Activated CD8-positive, alpha-beta T cell treated with anti-CD3 and anti-CD28 coated beads, Interleukin-2, amount 10 ng/mL, durations not matched to agents 7 days and 5 days (primary cell): ENCODE measurements at regions of chr11 and their contacts with region 1.

Region 1: DNA sequence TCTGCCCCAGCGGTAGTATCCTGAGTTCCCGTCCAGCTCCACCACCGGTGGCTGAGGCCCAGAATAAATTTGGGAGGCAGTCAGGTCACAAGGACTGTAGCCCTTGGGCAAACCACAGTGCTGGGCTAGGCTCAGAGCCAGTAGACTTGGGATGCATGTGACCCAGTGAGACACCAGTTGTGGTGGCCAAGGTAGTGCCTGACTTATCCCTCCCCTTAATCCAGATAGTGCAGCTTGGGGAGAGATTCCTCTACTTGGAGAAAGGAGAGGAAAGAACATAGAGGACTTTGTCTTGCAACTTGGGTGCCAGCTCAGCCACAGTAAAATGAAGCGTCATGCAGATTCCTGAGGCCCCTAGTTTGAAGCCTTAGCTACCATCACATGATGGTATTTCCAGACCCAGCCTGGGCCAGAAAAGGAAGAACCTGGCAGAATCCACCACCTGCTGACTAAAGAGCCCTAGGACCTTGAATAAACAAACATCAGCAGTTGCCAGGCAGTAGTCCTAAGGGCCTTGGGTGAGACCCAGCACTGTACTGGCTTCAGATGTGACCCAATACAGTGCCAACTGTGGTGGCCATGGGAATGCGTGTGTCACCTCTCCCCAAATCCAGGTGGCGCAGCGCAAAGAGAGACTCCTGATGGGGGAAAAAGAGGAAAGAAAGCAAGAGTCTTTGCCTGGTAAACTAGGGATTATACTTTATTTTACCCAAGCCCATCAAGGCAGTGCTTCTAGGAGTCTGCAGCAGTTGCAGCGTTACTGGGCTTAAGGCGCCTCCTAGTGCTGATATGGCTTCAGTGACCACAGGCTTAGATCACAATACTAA is 17.0 kb upstream of the DDX10 start:
- DNase-seq: peak; percentile 73
- ATAC-seq: peak; percentile 90
- H3K4me3 Mint-ChIP-seq: no peak overlapping the region
- H3K27ac Mint-ChIP-seq: no peak overlapping the region
- H3K4me1 Mint-ChIP-seq: no peaks in the 10 kb centered on the region
- H3K27me3 Mint-ChIP-seq: peaks cover 1% of the 10 kb centered on the region

Region 2: DNA sequence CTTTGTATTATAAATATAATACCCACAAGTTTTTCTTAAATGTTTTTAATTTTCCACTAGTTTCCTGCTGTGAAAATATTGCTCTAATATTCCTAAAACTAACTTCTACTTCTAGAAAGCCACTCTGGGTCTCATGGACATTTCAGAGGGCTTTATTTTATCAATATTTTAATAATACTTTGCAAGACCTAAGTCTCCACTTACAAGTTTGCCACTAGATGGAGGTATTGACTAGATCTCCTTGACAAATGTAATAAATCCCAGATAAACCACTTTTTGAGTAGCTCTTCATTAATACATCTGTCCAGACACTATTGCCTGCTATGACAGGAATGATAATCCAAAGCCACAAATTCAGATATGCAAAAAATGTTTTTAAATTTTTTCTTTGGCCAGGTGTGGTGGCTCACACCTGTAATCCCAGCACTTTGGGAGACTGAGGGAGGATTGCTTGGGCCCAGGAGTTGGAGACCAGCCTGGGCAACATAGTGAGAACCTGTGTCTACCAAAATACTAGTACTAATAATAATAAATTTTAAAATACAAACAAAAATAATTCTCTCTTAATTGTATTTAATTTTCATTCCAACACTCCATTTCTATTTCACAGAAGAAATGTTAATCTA is 530.1 kb before region 1 on chr11:
- CTCF ChIA-PET with region 1: interaction called, 39 read pairs
- POLR2A ChIA-PET with region 1: no interaction called
- DNase-seq: no peak
- ATAC-seq: no peak
- H3K4me3 Mint-ChIP-seq: no peak overlapping the region
- H3K27ac Mint-ChIP-seq: no peak overlapping the region
- H3K4me1 Mint-ChIP-seq: peaks cover 19% of the 10 kb centered on the region
- H3K27me3 Mint-ChIP-seq: no peaks in the 10 kb centered on the region

Region 3: GRCh38 chr11:108733479-108734116 is 85.7 kb after region 1 on chr11:
- CTCF ChIA-PET with region 1: no interaction called
- POLR2A ChIA-PET with region 1: no interaction called
- DNase-seq: peak; percentile 27
- ATAC-seq: peak; percentile 63
- H3K4me3 Mint-ChIP-seq: no peak overlapping the region
- H3K27ac Mint-ChIP-seq: peak overlapping the region; percentile 27
- H3K4me1 Mint-ChIP-seq: peaks cover 25% of the 10 kb centered on the region
- H3K27me3 Mint-ChIP-seq: no peaks in the 10 kb centered on the region